ENCODE measurements at regions of chr6 and their contacts with region 1.

Region 1: DNA sequence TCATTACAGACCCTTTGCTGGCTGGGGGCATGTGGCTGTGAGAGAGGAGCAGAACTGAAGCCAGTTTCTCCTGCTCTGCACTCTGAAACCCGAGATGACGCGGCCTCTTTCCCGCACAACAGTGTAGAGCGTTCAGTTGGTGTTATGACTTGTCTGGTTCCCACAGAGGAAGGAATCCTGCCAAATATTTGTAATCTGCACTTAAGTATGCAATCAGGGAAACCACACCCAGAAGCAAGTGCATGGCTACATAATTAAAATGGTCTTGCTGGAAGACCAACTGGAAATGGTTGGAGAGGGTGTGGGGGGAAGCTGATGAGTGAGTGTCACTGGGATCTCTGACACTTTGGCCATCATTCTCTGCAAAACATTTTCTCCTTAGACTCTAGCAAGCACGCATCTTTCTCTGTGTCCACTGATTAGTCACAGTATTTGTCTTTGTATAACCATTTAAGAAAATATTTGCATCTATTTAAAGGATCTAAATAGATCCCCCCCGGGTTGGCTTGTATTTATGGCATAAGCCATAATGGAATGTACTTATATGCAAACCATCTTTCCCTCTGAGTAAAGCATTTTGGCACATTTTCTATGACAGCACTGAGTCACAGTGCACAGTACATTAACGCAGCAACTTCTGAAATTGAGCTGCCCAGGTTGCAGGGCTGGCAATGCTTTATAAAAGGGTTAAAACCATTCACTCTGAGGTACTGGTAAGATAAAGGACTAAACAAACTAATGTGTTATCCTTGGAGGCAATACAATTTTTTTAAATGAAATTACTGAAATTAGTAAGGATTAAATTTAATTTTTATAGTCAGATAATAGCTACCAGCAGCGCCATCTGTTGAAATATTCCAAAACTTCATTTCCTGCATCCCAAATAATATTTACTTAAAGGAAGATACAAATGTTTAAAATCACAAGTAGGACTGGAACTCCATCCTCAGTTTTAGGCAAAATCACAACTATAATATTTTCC is 76.7 kb downstream of the FOXC1 start:
- DNase-seq: peak; percentile 70 to 90
- H3K4me3 ChIP-seq: no peak overlapping the region
- H3K27ac ChIP-seq: peak overlapping the region; percentile 58
- H3K4me1 ChIP-seq: peaks cover 45% of the 10 kb centered on the region
- H3K27me3 ChIP-seq: no peaks in the 10 kb centered on the region
- CTCF ChIP-seq: peak; percentile 61

Region 2: DNA sequence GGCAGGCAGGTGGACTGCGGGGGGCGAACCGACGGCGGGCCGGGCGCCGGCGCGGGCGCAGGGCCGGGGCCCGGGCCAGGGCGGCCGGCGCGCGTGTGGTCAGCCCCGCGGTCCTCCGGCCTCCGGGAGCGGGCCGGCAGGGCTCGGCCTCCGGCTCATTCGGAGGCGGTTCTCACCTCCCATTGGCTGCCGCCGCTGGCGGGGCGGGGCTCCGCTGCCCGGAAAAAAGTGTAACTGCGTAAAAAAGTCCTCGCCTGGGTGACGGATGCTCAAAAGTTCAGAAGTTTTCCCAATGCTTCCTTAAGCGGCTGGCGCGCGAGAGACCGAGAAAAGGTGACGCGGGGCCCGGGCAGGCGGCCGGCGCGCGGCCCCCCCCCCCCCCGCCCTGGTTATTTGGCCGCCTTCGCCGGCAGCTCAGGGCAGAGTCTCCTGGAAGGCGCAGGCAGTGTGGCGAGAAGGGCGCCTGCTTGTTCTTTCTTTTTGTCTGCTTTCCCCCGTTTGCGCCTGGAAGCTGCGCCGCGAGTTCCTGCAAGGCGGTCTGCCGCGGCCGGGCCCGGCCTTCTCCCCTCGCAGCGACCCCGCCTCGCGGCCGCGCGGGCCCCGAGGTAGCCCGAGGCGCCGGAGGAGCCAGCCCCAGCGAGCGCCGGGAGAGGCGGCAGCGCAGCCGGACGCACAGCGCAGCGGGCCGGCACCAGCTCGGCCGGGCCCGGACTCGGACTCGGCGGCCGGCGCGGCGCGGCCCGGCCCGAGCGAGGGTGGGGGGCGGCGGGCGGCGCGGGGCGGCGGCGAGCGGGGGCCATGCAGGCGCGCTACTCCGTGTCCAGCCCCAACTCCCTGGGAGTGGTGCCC is 76.5 kb before region 1 on chr6 and contains the start of gene FOXC1:
- CTCF ChIA-PET with region 1: interaction called, 6 read pairs
- POLR2A ChIA-PET with region 1: no interaction called
- intact Hi-C with region 1: loop called (anchors 1 kb)
- DNase-seq: peak; percentile 81 to 96
- H3K4me3 ChIP-seq: peak within 1 kb of the TSS; percentile 89
- H3K27ac ChIP-seq: peak within 1 kb of the TSS; percentile 54
- H3K4me1 ChIP-seq: no peaks in the 10 kb centered on the region; the same call in 1 of the 2 replicates
- H3K27me3 ChIP-seq: no peaks in the 10 kb centered on the region
- CTCF ChIP-seq: no peak
- total RNA-seq, gene FOXC1: 16.2 and 18.6 TPM in 2 replicates

Region 3: GRCh38 chr6:1636971-1637871 is 49.2 kb before region 1 on chr6:
- CTCF ChIA-PET with region 1: no interaction called
- POLR2A ChIA-PET with region 1: no interaction called
- intact Hi-C with region 1: loop called (anchors 1 kb)
- DNase-seq: peak; percentile 89 to 90
- H3K4me3 ChIP-seq: no peak overlapping the region
- H3K27ac ChIP-seq: peak overlapping the region; percentile 76
- H3K4me1 ChIP-seq: peaks cover 55% of the 10 kb centered on the region
- H3K27me3 ChIP-seq: no peaks in the 10 kb centered on the region
- CTCF ChIP-seq: no peak

Region 4: DNA sequence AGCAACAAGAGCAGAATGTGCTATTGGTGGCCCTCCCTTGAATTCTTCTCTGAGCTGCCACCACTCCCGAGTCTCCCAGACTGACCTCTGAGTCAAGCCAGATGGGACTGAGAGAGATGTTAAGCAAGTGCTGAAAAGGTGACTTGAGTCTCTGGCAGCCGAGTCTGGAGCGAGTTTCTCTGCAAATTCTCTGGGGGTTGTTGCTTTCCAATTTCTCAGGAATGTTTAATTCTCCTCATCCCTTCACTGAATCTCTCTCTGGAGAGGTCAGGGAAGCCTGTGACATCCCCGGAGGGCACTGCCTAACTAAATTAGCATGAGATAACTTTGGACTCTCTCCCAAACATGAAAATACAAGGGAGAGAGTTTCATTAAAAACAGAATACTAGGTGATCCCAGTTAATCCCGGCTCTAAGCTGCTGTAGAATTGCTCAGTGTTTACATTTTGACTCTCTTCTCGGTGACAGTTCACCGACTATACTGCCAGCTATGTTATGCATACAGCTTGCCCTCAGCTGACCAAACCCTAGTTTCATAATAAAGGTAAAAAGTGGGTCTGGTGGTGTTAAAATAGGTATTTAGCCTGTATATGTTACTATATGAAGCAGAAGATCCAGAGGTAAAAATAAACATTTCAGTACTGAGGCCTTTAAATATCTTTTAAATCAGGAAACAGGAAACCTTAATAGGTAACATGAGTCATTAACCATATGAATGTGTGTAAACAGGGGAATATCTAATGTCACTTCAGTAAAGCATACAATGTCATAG is 81.3 kb after region 1 on chr6:
- CTCF ChIA-PET with region 1: interaction called, 3 read pairs
- POLR2A ChIA-PET with region 1: no interaction called
- intact Hi-C with region 1: loop called (anchors 5 kb)
- DNase-seq: peak; percentile 47 to 81
- H3K4me3 ChIP-seq: peak overlapping the region; percentile 43
- H3K27ac ChIP-seq: peak overlapping the region; percentile 94
- H3K4me1 ChIP-seq: peaks cover 50% of the 10 kb centered on the region
- H3K27me3 ChIP-seq: no peaks in the 10 kb centered on the region
- CTCF ChIP-seq: no peak

Region 5: DNA sequence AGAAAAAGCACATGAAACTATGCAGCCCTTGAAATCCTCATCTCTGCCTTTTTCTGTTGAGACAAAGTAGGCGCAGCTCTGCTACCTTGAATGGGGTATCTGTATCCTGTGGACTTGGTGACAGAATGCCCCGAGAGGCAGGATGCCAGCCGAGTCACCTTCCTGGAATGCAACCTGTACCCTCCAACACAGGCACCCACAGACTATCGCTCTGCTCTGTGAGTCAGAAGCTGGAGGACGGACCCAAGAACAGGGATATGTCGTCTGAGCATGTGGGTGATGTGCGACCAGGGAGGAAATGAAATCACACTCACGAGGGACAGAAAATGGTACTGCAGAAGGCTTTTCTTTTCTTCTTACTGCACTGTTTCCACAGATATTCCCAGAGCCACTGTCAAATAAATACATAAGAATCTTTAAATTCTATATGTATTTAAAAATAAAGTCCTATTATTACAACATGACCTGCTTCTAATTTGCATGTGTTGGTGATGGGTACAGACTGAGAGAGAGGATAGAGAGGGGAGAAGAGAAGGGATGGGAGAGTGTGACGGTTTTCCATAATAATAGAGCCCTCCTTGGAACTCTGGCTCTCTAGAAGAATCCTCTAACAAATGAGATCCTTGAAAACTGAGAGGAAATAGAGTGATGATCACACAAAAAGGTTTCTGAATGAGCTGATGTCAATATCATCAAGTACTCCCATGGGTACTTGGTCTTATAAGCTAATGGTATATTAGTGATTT is 231.4 kb after region 1 on chr6:
- CTCF ChIA-PET with region 1: no interaction called
- POLR2A ChIA-PET with region 1: no interaction called
- intact Hi-C with region 1: loop called (anchors 2 kb)
- DNase-seq: peak; percentile 91 to 94
- H3K4me3 ChIP-seq: no peak overlapping the region
- H3K27ac ChIP-seq: peak overlapping the region; percentile 89
- H3K4me1 ChIP-seq: peaks cover 30% of the 10 kb centered on the region
- H3K27me3 ChIP-seq: no peaks in the 10 kb centered on the region
- CTCF ChIP-seq: no peak

Measured in PC-9 (cell line).